Activated naive CD4-positive, alpha-beta T cell treated with anti-CD3 and anti-CD28 coated beads for 36 hours (primary cell): ENCODE measurements at regions of chr18 and their contacts with region 1.

Region 1: GRCh38 chr18:54261894-54262293 is 7.4 kb upstream of the POLI start:
- DNase-seq: peak; percentile 79
- H3K4me3 Mint-ChIP-seq: no peak overlapping the region
- H3K27ac Mint-ChIP-seq: peak overlapping the region; percentile 77
- H3K4me1 Mint-ChIP-seq: peaks cover 42% of the 10 kb centered on the region
- H3K27me3 Mint-ChIP-seq: no peaks in the 10 kb centered on the region

Region 2: DNA sequence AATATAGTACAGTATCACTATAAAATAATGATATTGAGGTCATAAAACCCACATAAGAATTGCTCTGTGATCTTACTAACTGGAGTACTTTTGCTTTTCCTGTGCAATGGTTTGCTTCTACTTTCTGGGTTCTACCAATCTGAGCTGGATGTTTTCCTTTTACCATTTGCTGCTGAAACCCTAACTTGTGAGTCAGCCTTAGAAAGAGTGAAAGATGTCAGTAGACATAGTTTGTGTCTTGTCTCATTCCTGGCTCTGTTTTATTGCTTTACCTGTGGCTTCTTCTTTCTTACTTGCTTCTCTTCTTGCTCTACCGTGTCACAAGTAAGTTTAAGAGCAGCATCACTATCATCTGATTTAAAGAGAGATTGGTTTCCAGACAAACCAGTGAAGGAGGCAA is 98.4 kb before region 1 on chr18:
- CTCF ChIA-PET with region 1: no interaction called
- intact Hi-C with region 1: loop called (anchors 1 kb)
- DNase-seq: no peak
- H3K4me3 Mint-ChIP-seq: no peak overlapping the region
- H3K27ac Mint-ChIP-seq: peak overlapping the region; percentile 87
- H3K4me1 Mint-ChIP-seq: peaks cover 21% of the 10 kb centered on the region
- H3K27me3 Mint-ChIP-seq: no peaks in the 10 kb centered on the region

Region 3: DNA sequence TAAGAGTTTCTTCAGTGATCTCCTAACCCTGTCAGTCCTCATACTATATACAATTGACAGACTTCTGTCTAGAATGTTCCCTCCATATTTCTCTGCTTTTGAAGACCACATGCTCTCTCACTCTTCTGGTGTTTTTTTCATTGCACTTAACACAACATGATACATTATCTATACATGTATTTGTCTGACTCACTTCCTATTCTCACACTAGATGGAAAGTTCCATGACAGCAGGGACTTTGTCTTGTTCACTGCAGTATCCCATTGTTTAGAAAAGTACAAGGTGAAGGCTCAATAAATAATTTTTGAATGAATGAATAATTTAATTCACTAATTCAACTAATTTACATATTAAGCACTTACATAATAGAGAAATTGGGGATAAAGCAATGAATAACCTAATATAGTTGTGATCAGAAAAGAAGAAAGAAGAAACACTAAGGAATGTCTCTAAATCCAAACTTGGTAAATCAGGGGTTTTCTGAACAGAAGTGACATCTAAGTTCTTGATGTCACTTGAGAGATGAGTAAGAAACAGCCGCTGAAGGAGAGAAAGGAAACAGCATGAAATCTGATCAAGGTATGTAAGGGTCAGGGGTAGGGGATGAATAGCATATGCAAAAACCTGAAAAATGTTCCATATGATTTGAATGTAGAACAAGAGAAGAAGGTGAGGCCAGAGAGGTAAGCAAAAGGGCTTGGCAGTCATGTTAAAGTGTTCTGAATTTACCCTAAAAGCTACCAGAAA is 79.9 kb before region 1 on chr18:
- CTCF ChIA-PET with region 1: no interaction called
- intact Hi-C with region 1: loop called (anchors 1 kb)
- DNase-seq: peak; percentile 20
- H3K4me3 Mint-ChIP-seq: no peak overlapping the region
- H3K27ac Mint-ChIP-seq: no peak overlapping the region
- H3K4me1 Mint-ChIP-seq: peaks cover 9% of the 10 kb centered on the region
- H3K27me3 Mint-ChIP-seq: no peaks in the 10 kb centered on the region

Region 4: GRCh38 chr18:54209471-54210180 is 52.3 kb before region 1 on chr18:
- CTCF ChIA-PET with region 1: interaction called, 4 read pairs
- intact Hi-C with region 1: loop called (anchors 1 kb)
- DNase-seq: no peak
- H3K4me3 Mint-ChIP-seq: peak overlapping the region; percentile 50
- H3K27ac Mint-ChIP-seq: peak overlapping the region; percentile 88
- H3K4me1 Mint-ChIP-seq: peaks cover 54% of the 10 kb centered on the region
- H3K27me3 Mint-ChIP-seq: no peaks in the 10 kb centered on the region

Region 5: GRCh38 chr18:54247511-54248175 is 14.3 kb before region 1 on chr18:
- CTCF ChIA-PET with region 1: no interaction called
- intact Hi-C with region 1: loop called (anchors 1 kb)
- DNase-seq: no peak
- H3K4me3 Mint-ChIP-seq: peak overlapping the region; percentile 29
- H3K27ac Mint-ChIP-seq: peak overlapping the region; percentile 80
- H3K4me1 Mint-ChIP-seq: peaks cover 28% of the 10 kb centered on the region
- H3K27me3 Mint-ChIP-seq: no peaks in the 10 kb centered on the region